ENCODE measurements at regions of chr19 and their contacts with region 1.

Region 1: DNA sequence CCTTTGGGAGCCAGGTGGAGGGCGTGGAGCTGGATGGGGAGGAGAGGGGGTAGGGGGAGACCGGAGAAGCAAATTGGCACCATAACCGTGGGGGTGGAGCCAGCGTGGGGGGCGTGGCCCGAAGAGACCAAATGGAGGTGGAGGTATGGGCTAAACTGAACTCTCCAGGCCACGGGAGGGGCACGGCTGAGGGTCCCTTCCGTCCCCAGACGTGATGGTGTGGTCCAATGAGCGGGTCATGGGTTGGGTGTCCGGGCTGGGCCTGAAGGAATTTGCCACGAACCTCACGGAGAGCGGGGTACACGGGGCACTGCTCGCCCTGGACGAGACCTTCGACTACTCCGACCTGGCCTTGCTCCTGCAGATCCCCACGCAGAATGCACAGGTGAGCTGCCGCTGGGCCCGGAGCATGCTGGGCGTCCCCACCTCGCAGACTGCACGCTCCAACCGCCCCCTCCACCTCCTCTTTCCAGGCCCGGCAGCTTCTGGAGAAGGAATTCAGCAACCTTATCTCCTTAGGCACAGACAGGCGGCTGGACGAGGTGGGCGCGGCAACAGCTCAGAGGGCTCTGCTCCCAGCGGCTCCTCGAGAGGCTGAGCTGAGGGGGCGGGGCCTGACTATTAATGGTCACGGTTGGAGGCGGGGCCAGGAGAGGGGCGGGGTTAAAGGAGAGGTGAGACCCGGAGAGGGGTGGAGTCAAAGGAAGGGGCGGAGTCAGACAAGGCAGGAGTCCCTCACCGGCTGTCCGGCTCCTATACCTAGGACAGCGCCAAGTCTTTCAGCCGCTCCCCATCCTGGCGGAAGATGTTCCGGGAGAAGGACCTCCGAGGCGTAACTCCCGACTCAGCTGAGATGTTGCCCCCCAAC is 6.2 kb downstream of the HRC start:
- DNase-seq: peak; percentile 98 to 99
- ATAC-seq: peak; percentile 79 to 89 (median 82)
- H3K4me3 ChIP-seq: peak overlapping the region; percentile 59 to 91 (median 69)
- H3K27ac ChIP-seq: peak overlapping the region; percentile 75 to 97 (median 84)
- H3K4me1 ChIP-seq: peaks cover 12 to 62% (median 48%) of the 10 kb centered on the region in 9 donors
- H3K27me3 ChIP-seq: peaks cover 0 to 40% (median 0%) of the 10 kb centered on the region in 7 donors
- CTCF ChIP-seq: no peak

Region 2: DNA sequence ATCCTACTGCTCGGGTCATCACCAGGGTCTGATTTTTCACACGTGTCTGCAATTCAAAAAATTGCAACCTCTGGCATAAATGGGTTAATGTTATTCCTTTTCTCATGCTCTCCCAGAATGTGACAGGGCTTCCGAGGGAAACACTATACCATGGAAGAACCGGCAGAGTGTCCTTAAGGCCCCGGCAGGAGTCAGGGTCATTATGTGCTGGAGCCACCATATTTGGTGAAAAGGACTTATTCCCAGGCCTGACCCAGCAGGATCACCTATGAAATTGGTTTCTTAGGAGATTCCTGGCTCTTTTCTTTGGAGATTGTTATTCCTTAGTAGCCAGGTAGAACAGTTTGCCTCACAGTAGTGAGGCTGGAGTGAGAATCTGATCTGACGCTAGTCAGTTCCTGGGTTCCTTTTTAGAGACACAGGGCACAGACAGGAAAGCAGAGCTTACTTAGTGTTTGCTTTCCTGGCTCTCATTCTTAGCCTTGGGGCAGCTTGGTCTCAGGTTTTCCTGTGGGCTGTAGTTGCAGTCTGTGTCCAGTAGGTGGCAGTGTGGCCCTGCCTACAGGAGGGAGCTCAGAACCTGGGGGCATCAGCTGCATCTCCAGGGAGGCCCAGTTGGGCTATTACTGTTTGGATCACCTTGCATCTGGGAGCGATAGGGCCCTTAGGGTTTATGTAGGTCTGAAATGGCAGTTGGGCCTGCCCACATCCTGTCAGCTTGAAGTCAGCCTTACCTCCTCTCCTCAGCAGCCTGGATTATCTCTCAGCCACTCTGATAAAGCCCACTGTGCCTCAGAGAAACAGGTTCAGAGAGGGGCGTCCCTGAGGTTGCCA is 51.3 kb before region 1 on chr19:
- intact Hi-C with region 1: loop called in 8 of 10 experiments (anchors 1 to 5 kb)
- DNase-seq: peak; percentile 55 to 56
- ATAC-seq: peak; percentile 28 to 79 (median 62)
- H3K4me3 ChIP-seq: no peak overlapping the region
- H3K27ac ChIP-seq: no peak overlapping the region
- H3K4me1 ChIP-seq: peaks cover 7 to 50% (median 17%) of the 10 kb centered on the region in 9 donors
- H3K27me3 ChIP-seq: no peaks in the 10 kb centered on the region
- CTCF ChIP-seq: peak; percentile 97 to 100 (median 99)

Region 3: GRCh38 chr19:49106648-49107135 is 42.3 kb before region 1 on chr19:
- intact Hi-C with region 1: loop called in 3 of 10 experiments (anchors 5 kb)
- DNase-seq: peak in 1 of 2 donors; percentile 62
- ATAC-seq: peak in 5 of 8 donors; percentile 21 to 43 (median 38)
- H3K4me3 ChIP-seq: no peak overlapping the region
- H3K27ac ChIP-seq: no peak overlapping the region
- H3K4me1 ChIP-seq: peaks cover 5 to 21% (median 10%) of the 10 kb centered on the region in 9 donors
- H3K27me3 ChIP-seq: no peaks in the 10 kb centered on the region
- CTCF ChIP-seq: peak; percentile 49 to 83 (median 77)

Region 4: DNA sequence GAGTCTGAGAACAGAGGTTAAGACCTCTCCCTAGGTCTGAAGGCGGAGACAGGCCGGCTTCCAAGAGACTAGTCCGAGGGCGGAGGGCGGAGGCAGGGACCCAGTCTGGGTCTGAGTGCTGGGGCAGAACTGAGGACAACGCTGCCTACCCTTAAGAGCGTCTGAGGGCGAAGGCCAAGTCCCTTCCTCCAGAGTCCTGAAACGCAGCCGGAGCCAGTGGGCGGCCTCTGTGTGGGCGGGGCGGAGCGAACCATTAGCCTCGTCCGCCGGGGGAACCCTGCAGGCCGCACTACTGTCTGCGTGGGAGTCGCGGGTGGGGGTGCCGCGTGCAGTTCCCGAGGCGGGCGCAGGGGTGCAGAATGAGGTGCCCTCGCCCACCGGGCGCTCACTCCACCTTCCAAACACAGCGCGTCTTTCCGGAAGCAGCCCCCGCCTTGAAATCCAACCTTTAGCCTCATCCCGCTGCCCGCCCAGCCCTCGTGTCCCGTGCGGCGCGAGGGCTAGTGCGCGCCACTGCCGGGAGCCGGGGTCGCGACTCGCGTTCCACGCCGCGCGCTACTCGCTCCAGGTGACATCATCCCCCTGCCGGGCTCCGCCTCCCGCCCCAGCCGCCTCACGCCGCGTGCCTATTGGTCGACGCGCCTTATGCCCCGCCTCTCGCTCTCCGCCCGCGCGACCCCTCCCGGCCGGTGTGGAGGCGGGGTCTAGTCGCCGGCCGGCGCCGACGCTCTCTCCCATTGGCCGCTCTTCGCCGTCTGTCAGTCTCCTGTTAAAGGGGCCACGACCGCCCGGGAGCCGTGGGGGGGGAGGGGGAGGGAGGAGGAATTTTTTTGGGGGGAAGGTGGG is 30.2 kb before region 1 on chr19 and contains the start of gene C19orf73:
- intact Hi-C with region 1: loop called in 4 of 10 experiments (anchors 2 to 5 kb)
- DNase-seq: peak; percentile 94 to 97
- ATAC-seq: peak; percentile 89 to 95 (median 94)
- H3K4me3 ChIP-seq: peak within 1 kb of the TSS; percentile 41 to 85 (median 64)
- H3K27ac ChIP-seq: peak within 1 kb of the TSS; percentile 86 to 99 (median 97)
- H3K4me1 ChIP-seq: peaks cover 11 to 50% (median 35%) of the 10 kb centered on the region in 9 donors
- H3K27me3 ChIP-seq: peaks cover 0 to 19% (median 0%) of the 10 kb centered on the region in 7 donors
- CTCF ChIP-seq: peak in 4 of 9 donors; percentile 20 to 40 (median 27)
- total RNA-seq, gene C19orf73: 0.64 to 2.3 (median 1.0) TPM